H1 (cell line): ENCODE measurements at regions of chr16 and their contacts with region 1.

Region 1: DNA sequence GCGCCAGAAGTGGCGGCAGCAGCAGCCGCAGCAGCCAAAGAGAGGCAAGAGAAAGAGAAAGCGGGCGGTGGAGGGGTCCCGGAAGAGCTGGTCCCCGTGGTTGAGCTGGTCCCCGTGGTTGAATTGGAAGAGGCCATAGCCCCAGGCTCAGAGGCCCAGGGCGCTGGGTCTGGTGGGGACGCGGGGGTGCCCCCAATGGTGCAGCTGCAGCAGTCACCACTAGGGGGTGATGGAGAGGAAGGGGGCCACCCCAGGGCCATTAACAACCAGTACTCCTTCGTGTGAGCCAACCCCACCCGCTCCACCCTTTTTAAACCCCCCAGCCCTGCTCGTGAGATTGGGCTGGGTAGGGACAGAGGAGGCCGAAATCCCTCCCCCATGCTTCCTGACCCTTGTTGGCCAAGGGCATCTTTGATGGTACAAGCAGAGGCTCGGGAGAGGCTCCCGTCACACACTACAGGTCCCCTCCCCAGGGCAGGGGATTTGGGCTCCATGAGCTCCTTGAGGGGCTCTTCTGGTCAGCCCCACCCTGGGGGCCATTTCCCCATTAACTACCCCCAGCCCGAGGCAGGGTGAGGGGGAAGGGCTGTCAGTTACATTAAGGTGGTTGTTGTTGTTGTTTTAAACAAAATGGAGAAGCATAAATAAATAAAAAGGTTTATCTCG is 4.6 kb upstream of the ATP2A1 start:
- DNase-seq: peak in 1 of 2 experiments; percentile 87
- H3K4me3 ChIP-seq: no peak overlapping the region
- H3K27ac ChIP-seq: no peak overlapping the region
- H3K4me1 ChIP-seq: peaks cover 0 to 17% (median 12%) of the 10 kb centered on the region in 4 experiments; a peak in 6 of 7 replicates
- H3K27me3 ChIP-seq: no peaks in the 10 kb centered on the region
- CTCF ChIP-seq: peak; percentile 80 to 87 (median 83)
- EP300 ChIP-seq: peak in 1 of 2 experiments; percentile 65; a peak in 1 of 3 replicates
- POLR2A ChIP-seq: no peak
- RAD21 ChIP-seq: peak; percentile 55 to 67

Region 2: DNA sequence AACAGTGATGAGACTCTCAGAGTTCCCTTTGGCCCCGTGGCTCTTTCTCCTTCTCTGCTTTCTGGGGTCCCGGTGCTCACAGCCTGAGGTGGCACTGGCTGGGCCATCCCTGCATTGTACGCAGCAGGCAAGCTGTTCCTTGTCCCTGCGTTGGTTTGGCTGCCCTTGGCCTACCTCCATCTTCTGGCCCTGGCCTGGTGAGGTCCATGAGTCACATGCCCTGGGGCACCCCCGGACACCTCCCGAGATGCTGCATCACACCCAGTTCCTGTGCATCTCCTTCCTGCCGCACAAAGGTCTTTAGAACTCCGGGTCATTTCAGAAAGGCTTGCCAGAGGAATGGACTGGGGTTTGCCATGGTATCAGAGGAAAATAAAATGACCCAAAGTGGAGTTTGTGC is 286.3 kb before region 1 on chr16:
- CTCF ChIA-PET with region 1: no interaction called
- POLR2A ChIA-PET with region 1: no interaction called
- DNase-seq: no peak
- H3K4me3 ChIP-seq: no peak overlapping the region
- H3K27ac ChIP-seq: no peak overlapping the region
- H3K4me1 ChIP-seq: no peaks in the 10 kb centered on the region
- H3K27me3 ChIP-seq: no peaks in the 10 kb centered on the region
- CTCF ChIP-seq: no peak
- EP300 ChIP-seq: no peak
- POLR2A ChIP-seq: no peak
- RAD21 ChIP-seq: no peak

Region 3: GRCh38 chr16:28924732-28925385 is 51.2 kb after region 1 on chr16 and contains the start of gene RABEP2:
- CTCF ChIA-PET with region 1: interaction called, 13 read pairs
- POLR2A ChIA-PET with region 1: interaction called, 7 read pairs
- DNase-seq: peak; percentile 95 to 100
- H3K4me3 ChIP-seq: peak within 1 kb of the TSS; percentile 74 to 84 (median 79)
- H3K27ac ChIP-seq: peak within 1 kb of the TSS; percentile 90
- H3K4me1 ChIP-seq: peaks cover 0 to 6% (median 0%) of the 10 kb centered on the region in 4 experiments; a peak in 3 of 7 replicates
- H3K27me3 ChIP-seq: no peaks in the 10 kb centered on the region
- CTCF ChIP-seq: no peak
- EP300 ChIP-seq: no peak
- POLR2A ChIP-seq: no peak
- RAD21 ChIP-seq: no peak
- total RNA-seq, gene RABEP2: 13.3 and 14.9 TPM in 2 replicates

Region 4: GRCh38 chr16:28950648-28951409 is 77.2 kb after region 1 on chr16 and contains the start of gene NFATC2IP:
- CTCF ChIA-PET with region 1: interaction called, 42 read pairs
- POLR2A ChIA-PET with region 1: interaction called, 17 read pairs
- DNase-seq: peak; percentile 99
- H3K4me3 ChIP-seq: peak within 1 kb of the TSS; percentile 76 to 98 (median 77)
- H3K27ac ChIP-seq: no peak within 1 kb of the TSS; the same call in 1 of the 2 replicates
- H3K4me1 ChIP-seq: peaks cover 0 to 7% (median under 1%) of the 10 kb centered on the region in 4 experiments; a peak in 3 of 7 replicates
- H3K27me3 ChIP-seq: no peaks in the 10 kb centered on the region
- CTCF ChIP-seq: no peak
- EP300 ChIP-seq: no peak
- POLR2A ChIP-seq: peak in 1 of 2 experiments; percentile 47; a peak in 1 of 3 replicates
- RAD21 ChIP-seq: no peak
- total RNA-seq, gene NFATC2IP: 54.4 and 56.0 TPM in 2 replicates